Posterior vena cava (tissue), 2 donors: ENCODE measurements at regions of chr12 and their contacts with region 1.

Region 1: DNA sequence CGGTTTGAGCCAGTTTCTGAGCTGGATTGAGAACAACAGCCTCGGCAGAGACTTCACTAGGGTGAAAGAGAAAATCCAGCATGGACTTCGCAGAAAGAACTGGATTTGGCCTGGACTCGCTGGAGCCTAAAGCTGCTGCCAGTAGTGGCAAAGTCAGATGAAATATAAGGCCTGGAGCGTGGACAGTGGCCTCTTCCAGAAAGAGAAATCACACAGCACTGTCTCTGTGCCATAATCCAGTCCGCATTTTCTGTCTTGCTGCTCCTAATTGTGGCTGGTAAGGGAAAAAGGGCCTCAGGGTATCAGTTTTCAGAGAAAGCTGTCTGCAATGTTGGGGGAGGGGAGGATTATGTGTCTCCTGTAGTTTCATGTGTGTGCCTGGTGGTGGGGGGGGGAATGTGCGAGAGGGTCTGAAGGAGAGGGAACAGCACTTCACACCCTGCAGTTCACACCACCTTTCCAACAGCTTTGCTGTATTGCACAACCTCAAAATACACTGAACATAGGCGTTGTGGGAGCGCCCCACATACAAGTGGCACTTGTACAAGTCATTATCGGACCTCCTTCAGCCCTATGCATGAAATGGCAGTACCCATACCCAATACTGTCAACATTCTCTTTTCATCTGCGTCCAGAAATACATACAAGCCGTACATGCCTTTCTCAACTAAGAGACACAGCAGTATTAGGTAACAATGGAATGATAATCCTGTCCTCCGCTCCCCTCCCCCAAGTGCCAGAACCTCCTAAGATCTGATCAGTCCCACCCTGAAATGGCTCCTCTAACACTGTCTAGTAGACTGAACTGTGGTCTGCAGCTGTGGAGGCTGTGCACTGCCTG is 107.5 kb upstream of the ATF7IP start:
- DNase-seq: peak; percentile 97

Region 2: GRCh38 chr12:13326076-13326475 is 931.9 kb before region 1 on chr12:
- intact Hi-C with region 1: no loop called
- DNase-seq: no peak

Region 3: DNA sequence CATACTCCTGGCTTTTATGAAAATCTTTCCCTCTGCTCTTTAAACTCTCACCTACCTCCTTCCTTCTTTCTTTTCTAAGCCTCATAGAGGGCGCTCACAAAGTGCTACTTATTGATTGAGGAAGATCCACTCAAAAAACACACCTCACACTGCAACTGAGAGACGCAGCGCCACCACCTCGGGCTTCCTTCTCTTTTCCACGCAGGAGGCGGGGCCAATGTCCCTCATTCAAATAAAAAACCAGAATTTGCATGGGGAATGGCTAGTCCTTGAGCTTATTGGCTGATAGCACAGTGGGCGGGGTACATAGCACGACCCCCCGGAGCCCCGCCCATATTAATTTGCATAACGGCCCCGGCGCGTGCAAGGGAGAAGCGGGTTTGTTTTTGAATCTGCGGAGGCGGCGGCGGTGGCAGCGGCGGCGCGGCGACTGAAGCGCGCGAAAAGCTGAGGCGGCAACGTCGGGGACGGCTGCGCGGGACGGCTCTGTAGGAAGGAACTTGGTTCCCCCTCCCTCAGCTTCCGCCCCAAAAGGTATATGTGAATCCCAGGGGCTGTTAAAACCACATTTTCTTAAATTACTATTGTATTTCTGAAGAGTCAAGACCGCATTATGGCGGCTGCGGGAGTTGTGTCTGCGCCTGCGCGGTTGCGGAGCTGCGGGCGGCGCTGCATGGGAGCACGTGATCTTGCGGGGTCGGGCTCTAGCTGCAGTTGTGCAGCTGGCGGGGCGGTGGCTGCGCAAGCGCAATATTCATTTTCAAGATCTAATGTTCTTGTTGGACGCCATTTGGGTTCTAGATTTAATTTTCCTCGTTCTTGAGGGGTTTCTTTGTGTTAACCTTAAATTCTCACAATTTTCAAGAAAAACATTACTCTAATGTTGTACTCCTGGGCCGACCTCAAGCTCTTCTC is 107.6 kb after region 1 on chr12 and contains the start of gene ATF7IP:
- intact Hi-C with region 1: loop called in 1 of 2 experiments (anchors 5 kb)
- DNase-seq: peak; percentile 99
- total RNA-seq, gene ATF7IP: 56.4 to 73.1 TPM

Region 4: GRCh38 chr12:14384783-14385638 is 127.1 kb after region 1 on chr12:
- intact Hi-C with region 1: loop called in 1 of 2 experiments (anchors 10 kb)
- DNase-seq: no peak